Psoas muscle (tissue), 8 donors: ENCODE measurements at regions of chr14 and their contacts with region 1.

Region 1: GRCh38 chr14:52552063-52552988 is at the starts of genes GPR137C and TXNDC16:
- DNase-seq: peak; percentile 100
- ATAC-seq: peak; percentile 97 to 99 (median 98)
- H3K4me3 ChIP-seq: peak within 1 kb of the TSS; percentile 82
- H3K27ac ChIP-seq: peak within 1 kb of the TSS; percentile 86
- H3K4me1 ChIP-seq: peaks cover 23% of the 10 kb centered on the region
- H3K27me3 ChIP-seq: no peaks in the 10 kb centered on the region
- CTCF ChIP-seq: no peak
- total RNA-seq, gene GPR137C: 0.13 to 1.6 (median 0.29) TPM
- total RNA-seq, gene TXNDC16: 1.8 to 4.2 (median 2.4) TPM

Region 2: DNA sequence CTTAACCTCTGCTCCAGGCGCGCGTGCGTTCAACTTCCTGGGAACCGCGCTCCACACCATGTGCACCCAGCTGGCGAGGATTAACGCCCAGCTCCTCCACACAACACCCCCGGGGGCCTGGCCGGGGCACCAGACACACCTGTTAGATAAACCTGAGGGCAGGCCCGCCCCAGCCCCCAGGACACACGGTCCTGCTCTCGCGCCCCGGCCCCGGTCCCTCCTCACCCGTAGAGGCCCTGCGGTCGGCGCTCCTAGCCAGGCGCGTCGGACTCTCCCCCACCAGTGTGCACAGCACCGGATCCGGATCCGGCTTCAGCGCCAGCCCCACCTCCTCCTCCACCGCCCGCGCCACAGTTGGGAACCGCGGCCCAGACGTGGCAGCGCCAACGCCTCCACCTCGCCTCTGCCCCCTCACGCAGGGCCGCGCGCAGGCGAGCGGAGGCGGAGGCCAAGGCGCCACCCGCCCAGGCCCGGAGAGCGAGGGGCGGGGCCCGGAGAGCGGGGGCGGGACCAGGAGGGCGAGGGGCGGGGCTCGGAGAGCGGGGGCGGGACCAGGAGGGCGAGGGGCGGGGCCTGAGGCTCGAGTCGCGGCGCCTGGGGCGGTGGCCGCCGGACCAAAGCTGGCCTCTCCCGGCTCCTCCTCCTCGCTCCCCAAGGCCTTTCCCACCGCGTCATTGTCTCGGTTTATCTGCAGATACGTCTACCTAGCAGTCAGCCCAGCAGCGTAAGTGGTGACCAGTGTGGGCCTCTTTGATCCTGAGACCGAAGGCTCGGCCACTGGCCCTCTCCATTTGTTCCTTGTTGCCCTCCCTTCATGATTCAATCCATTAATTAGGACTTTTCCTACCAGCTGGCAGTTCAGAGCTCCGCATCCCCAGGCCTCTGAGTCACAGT is 239.1 kb after region 1 on chr14 and contains the start of gene GNPNAT1:
- intact Hi-C with region 1: loop called in 1 of 2 experiments (anchors 5 kb)
- DNase-seq: peak; percentile 89 to 93
- ATAC-seq: peak; percentile 95 to 96 (median 96)
- H3K4me3 ChIP-seq: peak within 1 kb of the TSS; percentile 78
- H3K27ac ChIP-seq: peak within 1 kb of the TSS; percentile 87
- H3K4me1 ChIP-seq: peaks cover 9% of the 10 kb centered on the region
- H3K27me3 ChIP-seq: no peaks in the 10 kb centered on the region
- CTCF ChIP-seq: no peak
- total RNA-seq, gene GNPNAT1: 7.9 to 17.0 (median 15.2) TPM

Region 3: GRCh38 chr14:52961060-52961639 is 408.8 kb after region 1 on chr14:
- intact Hi-C with region 1: loop called in 1 of 2 experiments (anchors 10 kb)
- DNase-seq: peak; percentile 29 to 55
- ATAC-seq: peak; percentile 89 to 97 (median 93)
- H3K4me3 ChIP-seq: no peak overlapping the region
- H3K27ac ChIP-seq: peak overlapping the region; percentile 56
- H3K4me1 ChIP-seq: peaks cover 4% of the 10 kb centered on the region
- H3K27me3 ChIP-seq: no peaks in the 10 kb centered on the region
- CTCF ChIP-seq: peak; percentile 73